ENCODE measurements at regions of chr16 and their contacts with region 1.

Region 1: DNA sequence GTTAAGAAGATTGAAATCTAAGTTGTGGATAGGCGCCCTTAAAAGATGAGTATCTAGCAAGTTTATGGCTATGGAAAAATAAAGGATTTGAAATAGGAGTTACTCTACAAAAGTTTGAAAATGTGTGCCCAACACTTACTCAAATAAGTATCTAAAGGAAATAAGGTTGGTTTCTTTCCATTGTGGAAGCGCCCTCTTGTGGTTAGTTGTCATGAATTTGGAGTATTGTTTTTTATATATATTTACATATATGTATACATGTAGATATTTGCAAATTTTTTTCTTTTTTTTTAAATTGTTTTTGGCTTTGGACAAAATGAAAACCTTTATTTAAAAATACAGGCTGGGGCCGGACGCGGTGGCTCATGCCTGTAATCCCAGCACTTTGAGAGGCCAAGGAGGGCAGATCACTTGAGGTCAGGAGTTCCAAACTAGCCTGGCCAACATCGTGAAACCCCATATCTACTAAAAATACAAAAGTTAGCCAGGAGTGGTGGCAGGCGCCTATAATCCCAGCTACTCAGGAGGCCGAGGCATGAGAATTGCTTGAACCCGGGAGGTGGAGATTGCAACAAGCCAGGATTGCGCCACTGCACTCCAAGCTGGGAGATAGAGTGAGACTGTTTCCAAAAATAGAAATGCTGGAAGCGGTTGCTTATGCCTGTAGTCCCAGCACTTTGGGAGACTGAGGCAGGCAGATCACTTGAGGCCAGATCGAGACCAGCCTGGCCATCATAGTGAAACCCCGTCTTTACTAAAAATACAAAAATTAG is 24.0 kb upstream of the VPS4A start:
- DNase-seq: no peak
- H3K4me3 Mint-ChIP-seq: no peak overlapping the region
- H3K27ac Mint-ChIP-seq: no peak overlapping the region
- H3K4me1 Mint-ChIP-seq: no peaks in the 10 kb centered on the region
- H3K27me3 Mint-ChIP-seq: no peaks in the 10 kb centered on the region

Region 2: GRCh38 chr16:69132424-69133252 is 154.5 kb before region 1 on chr16 and contains the starts of genes CHTF8 and UTP4:
- intact Hi-C with region 1: no loop called
- DNase-seq: peak; percentile 86
- H3K4me3 Mint-ChIP-seq: peak within 1 kb of the TSS; percentile 97
- H3K27ac Mint-ChIP-seq: peak within 1 kb of the TSS; percentile 89
- H3K4me1 Mint-ChIP-seq: peaks cover 44% of the 10 kb centered on the region
- H3K27me3 Mint-ChIP-seq: no peaks in the 10 kb centered on the region
- total RNA-seq, gene CHTF8: 121 and 138 TPM in 2 replicates
- total RNA-seq, gene UTP4: 104 and 107 TPM in 2 replicates

Region 3: GRCh38 chr16:69150146-69150865 is 136.8 kb before region 1 on chr16:
- intact Hi-C with region 1: loop called (anchors 1 kb)
- DNase-seq: peak; percentile 20
- H3K4me3 Mint-ChIP-seq: no peak overlapping the region
- H3K27ac Mint-ChIP-seq: no peak overlapping the region
- H3K4me1 Mint-ChIP-seq: peaks cover 8% of the 10 kb centered on the region
- H3K27me3 Mint-ChIP-seq: no peaks in the 10 kb centered on the region

Measured in activated T-helper 2 cell treated with anti-CD3 and anti-CD28 coated beads, Interferon-gamma antibody, Interleukin-2, Interleukin-4, amounts not matched to agents 10 μg/mL and 5 μg/mL and 100 μg/mL, durations not matched to agents 14 hours and 24 hours and 36 hours (primary cell).